Common myeloid progenitor, CD34-positive (primary cell): ENCODE measurements at regions of chr19 and their contacts with region 1.

Region 1: GRCh38 chr19:11125994-11126685 is 29.4 kb downstream of the SPC24 start:
- DNase-seq: peak; percentile 68 to 84 (median 79)
- H3K4me3 ChIP-seq: no peak overlapping the region
- H3K27ac ChIP-seq: no peak overlapping the region
- H3K4me1 ChIP-seq: peaks cover 0 to 2% (median 0%) of the 10 kb centered on the region in 4 experiments
- H3K27me3 ChIP-seq: no peaks in the 10 kb centered on the region

Region 2: GRCh38 chr19:11035441-11036377 is 90.4 kb before region 1 on chr19:
- CTCF ChIA-PET with region 1: interaction called, 19 read pairs
- POLR2A ChIA-PET with region 1: no interaction called
- DNase-seq: peak; percentile 87 to 91 (median 88)
- H3K4me3 ChIP-seq: no peak overlapping the region
- H3K27ac ChIP-seq: no peak overlapping the region
- H3K4me1 ChIP-seq: no peaks in the 10 kb centered on the region
- H3K27me3 ChIP-seq: no peaks in the 10 kb centered on the region

Region 3: GRCh38 chr19:11064831-11065303 is 61.3 kb before region 1 on chr19:
- CTCF ChIA-PET with region 1: no interaction called
- POLR2A ChIA-PET with region 1: no interaction called
- DNase-seq: peak in 2 of 3 donors; percentile 29 to 36
- H3K4me3 ChIP-seq: no peak overlapping the region
- H3K27ac ChIP-seq: no peak overlapping the region
- H3K4me1 ChIP-seq: peaks cover 0 to 4% (median 2%) of the 10 kb centered on the region in 4 experiments
- H3K27me3 ChIP-seq: no peaks in the 10 kb centered on the region

Region 4: GRCh38 chr19:11111117-11111774 is 14.9 kb before region 1 on chr19:
- CTCF ChIA-PET with region 1: interaction called, 15 read pairs
- POLR2A ChIA-PET with region 1: interaction called, 4 read pairs
- DNase-seq: no peak
- H3K4me3 ChIP-seq: no peak overlapping the region
- H3K27ac ChIP-seq: no peak overlapping the region
- H3K4me1 ChIP-seq: no peaks in the 10 kb centered on the region
- H3K27me3 ChIP-seq: no peaks in the 10 kb centered on the region

Region 5: DNA sequence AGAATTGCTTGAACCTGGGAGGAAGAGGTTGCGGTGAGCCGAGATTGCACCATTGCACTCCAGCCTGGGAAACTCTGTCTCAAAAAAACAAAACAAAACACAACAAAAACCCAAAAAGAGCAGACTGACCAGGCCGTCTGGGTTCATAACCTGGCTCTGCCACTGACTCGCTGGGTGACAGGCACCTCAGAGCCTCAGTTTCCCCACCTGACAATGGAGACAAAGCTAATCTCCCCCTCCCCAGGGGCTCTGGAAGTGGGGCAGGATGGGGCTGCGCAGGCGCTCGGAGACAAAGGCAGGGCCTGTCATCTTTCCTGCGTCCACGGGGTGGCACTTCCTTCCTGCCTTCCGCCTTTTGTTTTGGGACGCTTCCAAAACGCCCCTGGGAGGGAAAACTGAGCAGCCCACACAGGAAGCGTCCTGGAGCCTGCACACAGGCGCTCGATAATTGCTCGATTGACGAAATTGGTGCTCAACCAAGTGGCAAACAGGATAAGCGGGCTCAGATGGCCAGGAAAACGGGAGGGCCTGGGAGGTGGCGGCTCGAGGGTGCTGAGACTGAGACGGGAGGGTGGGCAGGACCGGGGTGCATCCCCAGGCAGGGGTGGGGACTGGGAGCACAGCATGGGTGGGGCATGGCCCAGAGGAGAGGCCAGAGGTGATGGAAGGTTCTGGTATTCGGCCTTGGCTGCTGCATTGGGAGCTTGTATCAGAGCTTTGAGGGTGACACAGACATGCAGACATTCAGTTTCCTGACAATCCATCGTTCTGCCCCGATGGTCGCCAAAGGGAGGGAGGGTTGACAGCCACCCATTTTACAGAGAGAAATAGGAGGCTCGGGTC is 11.6 kb after region 1 on chr19:
- CTCF ChIA-PET with region 1: interaction called, 34 read pairs
- POLR2A ChIA-PET with region 1: no interaction called
- DNase-seq: peak; percentile 49 to 61 (median 56)
- H3K4me3 ChIP-seq: peak overlapping the region in 4 of 7 experiments; percentile 37 to 51 (median 40)
- H3K27ac ChIP-seq: no peak overlapping the region
- H3K4me1 ChIP-seq: peaks cover 0 to 39% (median 32%) of the 10 kb centered on the region in 4 experiments
- H3K27me3 ChIP-seq: no peaks in the 10 kb centered on the region

Region 6: DNA sequence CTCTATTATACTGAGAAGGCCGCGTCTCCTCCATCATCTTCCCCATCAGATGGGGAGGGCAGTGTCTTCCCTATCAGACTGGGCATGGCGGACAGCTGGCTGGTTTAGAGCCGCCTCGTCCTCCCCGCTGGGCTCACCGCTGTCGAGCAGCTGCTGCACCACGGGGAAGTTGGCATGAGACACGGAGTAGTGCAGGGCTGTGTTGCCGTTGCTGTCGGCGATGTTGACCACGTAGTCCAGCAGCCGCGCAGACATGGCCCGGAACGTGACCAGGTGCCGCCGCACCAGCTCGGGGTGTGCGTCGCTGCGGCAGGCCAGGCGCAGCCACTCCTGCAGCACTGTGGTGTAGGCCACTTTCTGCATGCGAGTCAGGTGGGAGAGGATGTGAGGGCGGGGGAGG is 48.2 kb after region 1 on chr19:
- CTCF ChIA-PET with region 1: no interaction called
- POLR2A ChIA-PET with region 1: no interaction called
- DNase-seq: no peak
- H3K4me3 ChIP-seq: no peak overlapping the region
- H3K27ac ChIP-seq: no peak overlapping the region
- H3K4me1 ChIP-seq: no peaks in the 10 kb centered on the region
- H3K27me3 ChIP-seq: no peaks in the 10 kb centered on the region

Region 7: GRCh38 chr19:11203194-11204075 is 77.3 kb after region 1 on chr19:
- CTCF ChIA-PET with region 1: interaction called, 16 read pairs
- POLR2A ChIA-PET with region 1: no interaction called
- DNase-seq: peak; percentile 66 to 90 (median 85)
- H3K4me3 ChIP-seq: no peak overlapping the region
- H3K27ac ChIP-seq: no peak overlapping the region
- H3K4me1 ChIP-seq: peaks cover 4 to 39% (median 23%) of the 10 kb centered on the region in 4 experiments
- H3K27me3 ChIP-seq: no peaks in the 10 kb centered on the region